Activated T-helper 1 cell treated with anti-CD3 and anti-CD28 coated beads, Interleukin-12 subunit alpha, Interleukin-12 subunit beta, Interleukin-2, Interleukin-4 antibody, amounts not matched to agents 30 ng/mL and 10 ng/mL and 1 ng/mL, durations not matched to agents 14 hours and 24 hours and 36 hours (primary cell): ENCODE measurements at regions of chr6 and their contacts with region 1.

Region 1: GRCh38 chr6:166786704-166787293 is 159.7 kb upstream of the RPS6KA2 start:
- DNase-seq: no peak
- H3K4me3 Mint-ChIP-seq: no peak overlapping the region
- H3K27ac Mint-ChIP-seq: no peak overlapping the region
- H3K4me1 Mint-ChIP-seq: no peaks in the 10 kb centered on the region
- H3K27me3 Mint-ChIP-seq: peaks cover 4% of the 10 kb centered on the region

Region 2: DNA sequence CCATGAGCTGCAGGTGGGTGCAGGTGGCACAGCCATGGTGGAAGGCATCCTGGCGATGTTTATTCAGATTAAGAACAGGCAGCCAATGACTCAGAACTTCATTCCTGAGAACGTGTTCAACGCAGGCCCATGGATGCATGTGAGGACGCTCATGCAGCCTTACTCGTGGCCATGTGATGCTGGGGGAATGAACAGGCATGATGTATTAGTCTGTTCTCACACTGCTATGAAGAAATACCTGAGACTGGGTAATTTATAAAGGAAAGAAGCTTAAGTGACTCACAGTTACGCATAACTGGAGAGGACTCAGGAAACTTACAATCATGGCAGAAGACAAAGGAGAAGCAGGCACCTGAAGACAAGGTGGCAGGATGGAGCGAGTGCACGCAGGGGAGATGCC is 22.9 kb after region 1 on chr6:
- intact Hi-C with region 1: no loop called
- DNase-seq: no peak
- H3K4me3 Mint-ChIP-seq: no peak overlapping the region
- H3K27ac Mint-ChIP-seq: no peak overlapping the region
- H3K4me1 Mint-ChIP-seq: no peaks in the 10 kb centered on the region
- H3K27me3 Mint-ChIP-seq: peaks cover 7% of the 10 kb centered on the region

Region 3: DNA sequence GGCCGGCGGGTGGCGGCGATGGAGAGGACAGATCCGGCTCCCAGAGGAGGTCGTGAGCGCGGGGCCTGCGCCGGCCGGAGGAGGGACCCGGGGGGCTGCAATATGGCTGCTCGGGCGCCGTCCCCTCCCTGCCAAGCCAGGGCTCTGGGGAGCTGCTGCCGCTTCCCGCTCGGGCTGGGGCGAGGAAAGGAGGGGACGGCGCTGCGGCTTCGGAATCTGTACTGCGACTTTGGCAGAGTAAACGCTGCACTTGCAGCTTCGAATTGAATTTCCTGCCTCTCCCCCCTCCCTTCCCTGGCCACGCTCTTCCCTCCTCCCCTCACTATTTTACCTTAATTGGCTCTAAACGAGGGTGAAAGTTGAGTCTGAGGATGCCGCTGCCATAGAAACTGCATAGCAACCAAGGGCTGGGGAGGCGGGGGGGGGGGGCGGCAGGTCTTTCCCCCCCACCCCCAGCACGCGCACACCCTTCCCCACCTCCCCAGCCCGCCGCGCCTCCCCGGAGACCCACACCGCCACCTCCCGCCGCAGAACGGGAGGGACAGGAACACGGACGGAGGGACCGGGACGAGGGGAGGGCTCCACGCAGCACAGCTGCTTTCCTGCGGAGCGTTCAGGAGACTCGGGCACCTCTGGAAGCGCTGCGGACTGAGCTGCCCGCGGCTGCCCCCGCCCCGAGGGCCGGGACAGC is 75.6 kb after region 1 on chr6:
- intact Hi-C with region 1: loop called (anchors 2 kb)
- DNase-seq: peak; percentile 9
- H3K4me3 Mint-ChIP-seq: peak overlapping the region; percentile 80
- H3K27ac Mint-ChIP-seq: no peak overlapping the region
- H3K4me1 Mint-ChIP-seq: peaks cover 7% of the 10 kb centered on the region
- H3K27me3 Mint-ChIP-seq: peaks cover 34% of the 10 kb centered on the region

Region 4: DNA sequence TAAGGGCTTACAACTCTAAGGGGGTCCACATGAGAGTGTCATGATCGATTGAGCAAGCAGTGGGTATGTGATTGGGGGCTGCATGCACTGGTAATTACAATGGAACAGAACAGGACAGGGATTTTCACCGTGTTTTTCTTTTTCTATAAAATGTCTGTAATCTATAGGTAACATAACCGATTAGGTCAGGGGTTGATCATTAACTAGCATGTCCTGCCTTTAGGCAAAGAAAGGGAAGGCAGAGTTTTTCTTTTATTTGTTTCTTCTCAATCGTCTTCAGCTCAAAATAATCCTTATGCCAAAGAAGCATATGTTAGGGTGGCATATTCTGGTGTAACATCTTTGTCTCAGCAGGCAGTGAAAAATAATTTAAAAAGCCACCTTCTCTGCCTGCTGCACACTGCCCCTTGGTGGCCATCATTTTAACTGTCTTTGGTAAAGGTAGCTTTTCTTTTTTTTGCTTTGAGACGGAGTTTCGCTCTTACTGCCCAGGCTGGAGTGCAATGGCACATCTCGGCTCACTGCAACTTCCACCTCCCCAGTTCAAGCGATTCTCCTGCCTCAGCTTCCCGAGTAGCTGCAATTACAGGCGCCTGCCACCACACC is 202.7 kb after region 1 on chr6:
- intact Hi-C with region 1: loop called (anchors 1 kb)
- DNase-seq: peak; percentile 39
- H3K4me3 Mint-ChIP-seq: no peak overlapping the region
- H3K27ac Mint-ChIP-seq: no peak overlapping the region
- H3K4me1 Mint-ChIP-seq: peaks cover 46% of the 10 kb centered on the region
- H3K27me3 Mint-ChIP-seq: peaks cover 1% of the 10 kb centered on the region

Region 5: GRCh38 chr6:167047554-167047953 is 260.8 kb after region 1 on chr6:
- intact Hi-C with region 1: loop called (anchors 2 kb)
- DNase-seq: peak; percentile 29
- H3K4me3 Mint-ChIP-seq: peak overlapping the region; percentile 19
- H3K27ac Mint-ChIP-seq: peak overlapping the region; percentile 33
- H3K4me1 Mint-ChIP-seq: peaks cover 21% of the 10 kb centered on the region
- H3K27me3 Mint-ChIP-seq: no peaks in the 10 kb centered on the region

Region 6: GRCh38 chr6:167119670-167120381 is 333.0 kb after region 1 on chr6:
- intact Hi-C with region 1: no loop called
- DNase-seq: no peak
- H3K4me3 Mint-ChIP-seq: no peak overlapping the region
- H3K27ac Mint-ChIP-seq: no peak overlapping the region
- H3K4me1 Mint-ChIP-seq: no peaks in the 10 kb centered on the region
- H3K27me3 Mint-ChIP-seq: peaks cover 7% of the 10 kb centered on the region

Region 7: GRCh38 chr6:167141667-167142432 is 355.1 kb after region 1 on chr6:
- intact Hi-C with region 1: loop called (anchors 1 kb)
- DNase-seq: peak; percentile 8
- H3K4me3 Mint-ChIP-seq: no peak overlapping the region
- H3K27ac Mint-ChIP-seq: no peak overlapping the region
- H3K4me1 Mint-ChIP-seq: no peaks in the 10 kb centered on the region
- H3K27me3 Mint-ChIP-seq: peaks cover 6% of the 10 kb centered on the region

Region 8: DNA sequence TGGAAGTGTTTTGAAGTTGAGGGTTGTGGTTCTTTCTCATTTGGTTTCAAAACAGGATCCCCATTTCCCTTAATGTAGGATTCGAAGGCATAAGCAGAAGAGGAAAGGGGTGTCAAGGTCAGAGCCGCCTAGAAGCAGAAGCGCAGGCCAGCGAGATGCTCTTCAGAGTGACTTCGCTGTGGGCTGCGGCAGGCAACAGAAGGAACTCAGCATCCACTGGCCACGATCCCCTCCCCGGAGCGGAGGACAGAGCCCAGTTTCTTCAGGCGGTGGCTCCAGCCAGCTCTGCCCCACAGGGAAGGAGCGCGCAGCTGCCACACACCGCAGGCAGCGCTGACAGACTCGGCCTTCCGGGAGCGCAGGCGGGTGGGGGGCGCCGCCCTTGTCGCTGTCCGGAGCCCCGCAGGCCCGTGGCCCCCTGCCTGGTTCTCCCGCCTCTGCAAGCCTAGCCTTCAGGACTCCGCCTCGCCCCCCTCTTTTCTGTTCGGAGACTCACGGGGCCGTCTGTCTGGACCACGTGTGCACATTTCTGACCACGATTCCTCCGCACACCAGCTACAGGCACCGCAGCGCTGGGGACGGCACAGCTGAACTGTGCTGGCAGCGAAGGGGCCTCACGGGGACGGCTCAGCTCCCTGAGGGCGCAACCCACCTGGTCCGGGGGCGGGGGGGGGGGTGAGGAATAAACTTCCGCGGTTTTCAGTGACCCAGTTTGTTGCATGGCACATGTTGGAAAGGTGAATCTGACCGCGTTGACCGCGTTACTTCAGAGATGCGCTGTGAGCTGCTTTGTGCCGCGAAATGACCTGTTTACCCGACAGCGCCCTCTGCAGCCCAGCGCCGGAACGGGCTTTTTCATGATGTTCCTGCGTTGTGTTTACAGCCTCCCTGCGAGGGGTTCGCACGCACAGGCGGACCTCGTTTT is 564.2 kb after region 1 on chr6:
- intact Hi-C with region 1: loop called (anchors 10 kb)
- DNase-seq: peak; percentile 72
- H3K4me3 Mint-ChIP-seq: peak overlapping the region; percentile 84
- H3K27ac Mint-ChIP-seq: peak overlapping the region; percentile 78
- H3K4me1 Mint-ChIP-seq: peaks cover 24% of the 10 kb centered on the region
- H3K27me3 Mint-ChIP-seq: peaks cover 33% of the 10 kb centered on the region